ENCODE measurements at regions of chr18 and their contacts with region 1.

Region 1: DNA sequence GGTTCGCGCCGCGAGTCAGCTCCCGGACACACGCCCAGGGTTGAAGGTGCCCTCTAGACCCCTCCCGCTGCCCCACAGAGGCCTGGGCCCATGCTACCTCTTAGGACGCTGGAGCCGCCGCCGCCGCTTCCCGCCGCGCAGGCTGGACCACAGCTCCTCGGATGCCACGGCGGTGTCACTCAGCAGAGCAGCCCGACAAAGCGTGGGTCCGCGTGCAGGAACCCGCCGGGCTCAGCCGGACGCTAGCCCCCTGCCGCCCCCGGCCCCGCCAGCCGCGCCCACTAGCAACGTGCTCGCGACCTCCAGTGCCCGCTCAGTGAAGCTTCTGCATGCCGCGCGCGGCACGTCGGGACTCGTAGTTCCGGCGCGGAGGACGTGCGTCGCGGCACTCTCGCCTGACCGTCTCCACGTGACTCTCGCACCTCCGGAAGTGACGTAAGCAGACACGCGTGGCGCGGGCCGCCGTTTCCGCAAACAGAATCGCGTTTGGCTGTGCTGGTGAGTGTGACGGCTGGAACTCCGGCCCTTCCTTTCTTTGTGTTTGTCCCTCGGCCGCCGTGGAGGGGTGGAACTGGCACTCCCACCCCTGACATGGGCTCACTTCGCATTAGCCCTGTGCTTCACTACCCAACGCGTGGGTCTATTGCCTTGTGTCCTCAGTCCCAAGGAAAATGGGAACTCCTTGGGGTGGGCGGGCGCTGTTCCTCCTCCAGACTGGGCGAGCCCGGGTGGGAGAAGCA is at the starts of genes FAM210A and RNMT:
- DNase-seq: peak; percentile 85 to 98 (median 92)
- ATAC-seq: peak; percentile 92
- H3K4me3 ChIP-seq: peak within 1 kb of the TSS; percentile 89
- H3K4me3 Mint-ChIP-seq: peak within 1 kb of the TSS; percentile 89
- H3K27ac ChIP-seq: peak within 1 kb of the TSS; percentile 86 to 91
- H3K27ac Mint-ChIP-seq: peak within 1 kb of the TSS; percentile 84
- H3K4me1 ChIP-seq: peaks cover 33% of the 10 kb centered on the region
- H3K4me1 Mint-ChIP-seq: peaks cover 74% of the 10 kb centered on the region
- H3K27me3 ChIP-seq: no peaks in the 10 kb centered on the region
- H3K27me3 Mint-ChIP-seq: no peaks in the 10 kb centered on the region
- CTCF ChIP-seq: no peak
- total RNA-seq, gene FAM210A: 3.4 to 3.5 TPM
- total RNA-seq, gene RNMT: 128 to 130 TPM

Region 2: GRCh38 chr18:12702221-12703095 is 1023.9 kb before region 1 on chr18 and contains the starts of genes CEP76 and PSMG2:
- CTCF ChIA-PET with region 1: no interaction called
- POLR2A ChIA-PET with region 1: no interaction called
- intact Hi-C with region 1: loop called (anchors 2 to 5 kb)
- DNase-seq: peak; percentile 69 to 91 (median 80)
- ATAC-seq: peak; percentile 73
- H3K4me3 ChIP-seq: peak within 1 kb of the TSS; percentile 96
- H3K4me3 Mint-ChIP-seq: peak within 1 kb of the TSS; percentile 94
- H3K27ac ChIP-seq: peak within 1 kb of the TSS; percentile 88 to 95
- H3K27ac Mint-ChIP-seq: peak within 1 kb of the TSS; percentile 85
- H3K4me1 ChIP-seq: peaks cover 25% of the 10 kb centered on the region
- H3K4me1 Mint-ChIP-seq: peaks cover 53% of the 10 kb centered on the region
- H3K27me3 ChIP-seq: no peaks in the 10 kb centered on the region
- H3K27me3 Mint-ChIP-seq: no peaks in the 10 kb centered on the region
- CTCF ChIP-seq: no peak
- total RNA-seq, gene CEP76: 8.0 to 8.7 TPM
- total RNA-seq, gene PSMG2: 58.4 to 61.7 TPM

Region 3: GRCh38 chr18:12947355-12948041 is 778.9 kb before region 1 on chr18 and contains the start of gene SEH1L:
- CTCF ChIA-PET with region 1: no interaction called
- POLR2A ChIA-PET with region 1: interaction called, 8 read pairs
- intact Hi-C with region 1: loop called (anchors 2 to 5 kb)
- DNase-seq: peak; percentile 96 to 100 (median 99)
- ATAC-seq: peak; percentile 80
- H3K4me3 ChIP-seq: peak within 1 kb of the TSS; percentile 69
- H3K4me3 Mint-ChIP-seq: peak within 1 kb of the TSS; percentile 92
- H3K27ac ChIP-seq: peak within 1 kb of the TSS; percentile 93 to 96
- H3K27ac Mint-ChIP-seq: peak within 1 kb of the TSS; percentile 96
- H3K4me1 ChIP-seq: peaks cover 38% of the 10 kb centered on the region
- H3K4me1 Mint-ChIP-seq: peaks cover 38% of the 10 kb centered on the region
- H3K27me3 ChIP-seq: no peaks in the 10 kb centered on the region
- H3K27me3 Mint-ChIP-seq: no peaks in the 10 kb centered on the region
- CTCF ChIP-seq: no peak
- total RNA-seq, gene SEH1L: 23.9 to 26.7 TPM

Region 4: DNA sequence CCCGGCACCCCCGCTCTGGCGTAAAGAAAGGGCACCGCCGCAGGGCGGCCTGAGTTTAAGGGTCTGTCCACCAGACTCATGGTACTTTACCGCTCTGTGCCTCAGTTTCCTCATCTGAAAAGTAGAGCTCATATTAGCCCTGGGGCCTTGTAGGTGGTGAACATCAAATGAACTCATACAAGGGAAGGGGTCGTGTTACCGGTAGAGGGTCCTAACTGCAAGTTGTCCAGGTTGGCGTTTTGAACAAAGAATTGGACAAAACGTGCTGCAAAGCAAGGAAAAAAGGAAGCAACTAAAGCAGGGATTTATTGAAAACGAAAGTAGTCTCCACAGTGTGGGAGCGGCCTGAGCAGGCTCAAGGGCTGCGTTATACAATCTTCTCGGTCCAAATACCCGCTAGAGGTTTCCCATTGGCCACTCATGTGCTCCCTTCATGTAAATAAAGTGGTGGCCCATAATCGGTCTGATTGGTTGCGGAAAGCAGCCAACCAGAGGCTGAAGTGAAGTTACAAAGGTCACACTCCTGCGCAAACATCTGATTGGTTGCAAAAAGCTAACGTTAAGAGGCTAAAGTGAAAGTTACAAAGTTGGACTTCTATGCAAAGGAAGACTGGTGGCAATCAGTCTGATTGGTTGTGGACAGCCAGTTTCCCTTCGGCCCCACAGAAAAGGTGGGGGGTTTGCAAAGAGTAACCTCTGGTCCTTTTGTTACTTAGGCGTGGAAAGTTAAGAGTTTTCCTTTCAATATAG is 588.6 kb before region 1 on chr18:
- CTCF ChIA-PET with region 1: no interaction called
- POLR2A ChIA-PET with region 1: no interaction called
- intact Hi-C with region 1: loop called in 1 of 2 experiments (anchors 5 kb)
- DNase-seq: peak; percentile 37 to 93 (median 58)
- ATAC-seq: peak; percentile 76
- H3K4me3 ChIP-seq: peak overlapping the region; percentile 72
- H3K4me3 Mint-ChIP-seq: peak overlapping the region; percentile 98
- H3K27ac ChIP-seq: peak overlapping the region; percentile 48 to 50
- H3K27ac Mint-ChIP-seq: peak overlapping the region; percentile 92
- H3K4me1 ChIP-seq: peaks cover 27% of the 10 kb centered on the region
- H3K4me1 Mint-ChIP-seq: peaks cover 32% of the 10 kb centered on the region
- H3K27me3 ChIP-seq: no peaks in the 10 kb centered on the region
- H3K27me3 Mint-ChIP-seq: no peaks in the 10 kb centered on the region
- CTCF ChIP-seq: no peak

Region 5: GRCh38 chr18:13520306-13520705 is 206.1 kb before region 1 on chr18:
- CTCF ChIA-PET with region 1: no interaction called
- POLR2A ChIA-PET with region 1: no interaction called
- intact Hi-C with region 1: no loop called
- DNase-seq: no peak
- ATAC-seq: no peak
- H3K4me3 ChIP-seq: no peak overlapping the region
- H3K4me3 Mint-ChIP-seq: no peak overlapping the region
- H3K27ac ChIP-seq: no peak overlapping the region
- H3K27ac Mint-ChIP-seq: no peak overlapping the region
- H3K4me1 ChIP-seq: peaks cover 5% of the 10 kb centered on the region
- H3K4me1 Mint-ChIP-seq: peaks cover 46% of the 10 kb centered on the region
- H3K27me3 ChIP-seq: no peaks in the 10 kb centered on the region
- H3K27me3 Mint-ChIP-seq: no peaks in the 10 kb centered on the region
- CTCF ChIP-seq: no peak

Region 6: DNA sequence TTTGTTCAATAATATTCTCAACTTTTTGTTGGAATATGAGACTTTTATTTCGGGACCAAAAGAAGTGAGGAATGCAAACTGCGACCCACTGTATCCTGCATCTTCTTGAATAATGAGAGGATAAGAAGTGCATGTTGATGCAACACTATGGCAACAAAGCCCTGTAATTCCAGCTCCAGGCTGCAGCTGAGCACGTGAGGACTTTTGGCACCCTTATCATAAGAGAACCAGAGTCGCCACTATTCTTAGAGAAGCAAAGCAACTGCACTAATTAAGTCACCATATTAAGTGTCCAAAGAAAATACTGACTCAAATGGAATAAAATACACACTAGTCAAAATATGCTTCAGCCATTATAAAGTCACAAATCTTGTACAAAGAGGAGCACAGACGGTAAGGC is 65.9 kb before region 1 on chr18:
- CTCF ChIA-PET with region 1: no interaction called
- POLR2A ChIA-PET with region 1: no interaction called
- intact Hi-C with region 1: no loop called
- DNase-seq: no peak
- ATAC-seq: no peak
- H3K4me3 ChIP-seq: no peak overlapping the region
- H3K4me3 Mint-ChIP-seq: no peak overlapping the region
- H3K27ac ChIP-seq: no peak overlapping the region
- H3K27ac Mint-ChIP-seq: no peak overlapping the region
- H3K4me1 ChIP-seq: no peaks in the 10 kb centered on the region
- H3K4me1 Mint-ChIP-seq: no peaks in the 10 kb centered on the region
- H3K27me3 ChIP-seq: no peaks in the 10 kb centered on the region
- H3K27me3 Mint-ChIP-seq: no peaks in the 10 kb centered on the region
- CTCF ChIP-seq: no peak

Region 7: GRCh38 chr18:14144628-14144895 is 418.2 kb after region 1 on chr18:
- CTCF ChIA-PET with region 1: no interaction called
- POLR2A ChIA-PET with region 1: no interaction called
- intact Hi-C with region 1: loop called in 1 of 2 experiments (anchors 5 kb)
- DNase-seq: no peak
- ATAC-seq: no peak
- H3K4me3 ChIP-seq: no peak overlapping the region
- H3K4me3 Mint-ChIP-seq: no peak overlapping the region
- H3K27ac ChIP-seq: no peak overlapping the region
- H3K27ac Mint-ChIP-seq: no peak overlapping the region
- H3K4me1 ChIP-seq: no peaks in the 10 kb centered on the region
- H3K4me1 Mint-ChIP-seq: no peaks in the 10 kb centered on the region
- H3K27me3 ChIP-seq: no peaks in the 10 kb centered on the region
- H3K27me3 Mint-ChIP-seq: no peaks in the 10 kb centered on the region
- CTCF ChIP-seq: no peak